MCF 10A (cell line): ENCODE measurements at regions of chr15 and their contacts with region 1.

Region 1: GRCh38 chr15:52780172-52780980 is 9.8 kb downstream of the ONECUT1 start:
- DNase-seq: peak; percentile 71
- H3K4me3 Mint-ChIP-seq: no peak overlapping the region
- H3K27ac Mint-ChIP-seq: no peak overlapping the region
- H3K4me1 Mint-ChIP-seq: no peaks in the 10 kb centered on the region
- H3K27me3 Mint-ChIP-seq: peaks cover 98% of the 10 kb centered on the region
- CTCF ChIP-seq: peak; percentile 88

Region 2: GRCh38 chr15:53665917-53666316 is 885.5 kb after region 1 on chr15:
- CTCF ChIA-PET with region 1: no interaction called
- POLR2A ChIA-PET with region 1: no interaction called
- intact Hi-C with region 1: loop called (anchors 5 kb)
- DNase-seq: no peak
- H3K4me3 Mint-ChIP-seq: no peak overlapping the region
- H3K27ac Mint-ChIP-seq: no peak overlapping the region
- H3K4me1 Mint-ChIP-seq: no peaks in the 10 kb centered on the region
- H3K27me3 Mint-ChIP-seq: peaks cover 53% of the 10 kb centered on the region
- CTCF ChIP-seq: no peak

Region 3: GRCh38 chr15:53716909-53717876 is 936.8 kb after region 1 on chr15:
- CTCF ChIA-PET with region 1: interaction called, 4 read pairs
- POLR2A ChIA-PET with region 1: interaction called, 3 read pairs
- intact Hi-C with region 1: loop called (anchors 1 kb)
- DNase-seq: peak; percentile 8
- H3K4me3 Mint-ChIP-seq: no peak overlapping the region
- H3K27ac Mint-ChIP-seq: no peak overlapping the region
- H3K4me1 Mint-ChIP-seq: no peaks in the 10 kb centered on the region
- H3K27me3 Mint-ChIP-seq: peaks cover 71% of the 10 kb centered on the region
- CTCF ChIP-seq: peak; percentile 30